Breast epithelium (tissue), 4 donors: ENCODE measurements at regions of chr9 and their contacts with region 1.

Region 1: GRCh38 chr9:71783120-71783530 is 14.8 kb upstream of the CEMIP2 start:
- DNase-seq: peak in 1 of 2 donors; percentile 39
- H3K4me3 ChIP-seq: peak overlapping the region in 1 of 3 donors; percentile 30
- H3K27ac ChIP-seq: peak overlapping the region in 1 of 2 donors; percentile 19
- H3K4me1 ChIP-seq: no peaks in the 10 kb centered on the region
- H3K27me3 ChIP-seq: no peaks in the 10 kb centered on the region
- CTCF ChIP-seq: no peak
- POLR2A ChIP-seq: no peak

Region 2: DNA sequence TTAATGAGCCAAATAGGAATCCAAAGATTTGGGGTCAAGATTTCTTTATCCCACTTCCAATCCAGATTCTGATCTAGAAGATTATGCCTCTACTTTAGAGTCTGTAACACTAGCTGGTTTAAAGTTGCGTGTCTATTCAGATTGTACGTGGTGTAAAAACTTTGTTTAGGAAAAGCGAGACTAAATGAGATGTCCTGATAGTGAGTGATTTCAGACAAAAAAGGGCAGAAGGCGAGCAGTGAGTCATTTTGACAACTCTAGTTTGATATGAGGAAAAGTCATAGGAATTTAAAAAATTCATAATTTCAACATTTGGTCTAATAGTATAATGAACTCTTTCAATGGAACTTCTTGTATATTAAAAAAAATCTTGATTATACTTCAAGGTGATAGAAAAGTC is 1249.1 kb before region 1 on chr9:
- intact Hi-C with region 1: loop called (anchors 5 kb)
- DNase-seq: no peak
- H3K4me3 ChIP-seq: no peak overlapping the region
- H3K27ac ChIP-seq: no peak overlapping the region
- H3K4me1 ChIP-seq: no peaks in the 10 kb centered on the region
- H3K27me3 ChIP-seq: no peaks in the 10 kb centered on the region
- CTCF ChIP-seq: no peak
- POLR2A ChIP-seq: no peak

Region 3: DNA sequence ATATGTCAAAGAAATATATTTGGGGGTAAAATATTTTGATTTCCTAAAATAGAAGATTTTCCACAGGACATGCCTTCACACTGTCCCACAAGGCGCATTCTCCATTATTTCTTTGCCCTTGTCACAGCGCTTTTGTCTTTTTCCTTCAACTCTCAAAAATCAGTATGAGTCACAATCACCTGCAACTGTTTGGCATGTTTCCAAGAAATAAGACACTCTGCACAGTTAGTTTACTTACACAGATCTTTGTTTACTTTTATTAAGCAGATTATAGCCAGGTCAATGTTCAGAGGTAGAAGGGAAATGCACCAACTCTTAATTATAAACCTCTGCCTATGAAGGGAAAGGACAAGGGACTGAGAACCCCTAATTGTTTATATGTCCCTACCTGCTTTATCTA is 24.3 kb before region 1 on chr9:
- intact Hi-C with region 1: no loop called
- DNase-seq: no peak
- H3K4me3 ChIP-seq: no peak overlapping the region
- H3K27ac ChIP-seq: no peak overlapping the region
- H3K4me1 ChIP-seq: no peaks in the 10 kb centered on the region
- H3K27me3 ChIP-seq: no peaks in the 10 kb centered on the region
- CTCF ChIP-seq: no peak
- POLR2A ChIP-seq: no peak

Region 4: DNA sequence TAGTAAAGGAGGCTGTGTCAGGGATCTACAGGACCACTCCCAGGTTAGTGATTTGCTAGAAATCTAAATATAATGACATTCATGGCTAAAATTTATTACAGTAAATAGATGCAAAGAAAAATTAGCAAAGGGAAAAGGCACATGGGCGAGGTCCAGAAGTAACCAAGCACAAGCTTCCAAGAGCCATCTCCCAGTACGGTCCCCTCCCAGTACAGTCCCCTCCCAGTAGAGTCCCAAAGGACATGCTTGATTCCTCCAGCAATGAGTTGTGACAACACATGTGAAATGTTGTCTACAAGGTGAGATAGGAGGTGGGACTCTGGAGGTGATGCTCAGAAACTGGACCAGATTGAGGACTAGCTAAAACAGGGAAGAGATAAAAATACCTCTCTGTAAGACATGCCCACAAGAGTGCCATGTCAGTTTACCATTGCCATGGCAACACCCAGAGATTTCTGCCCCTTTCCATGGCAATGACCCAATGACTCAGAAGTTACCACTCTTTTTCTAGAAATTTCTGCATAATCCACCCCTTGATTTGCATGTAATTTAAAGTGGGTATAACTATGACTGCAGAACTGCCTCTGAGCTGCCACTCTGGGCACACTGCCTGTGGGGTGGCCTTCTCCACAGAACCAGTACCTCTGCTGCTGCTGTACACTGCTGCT is 13.1 kb after region 1 on chr9:
- intact Hi-C with region 1: no loop called
- DNase-seq: no peak
- H3K4me3 ChIP-seq: no peak overlapping the region
- H3K27ac ChIP-seq: no peak overlapping the region
- H3K4me1 ChIP-seq: no peaks in the 10 kb centered on the region
- H3K27me3 ChIP-seq: no peaks in the 10 kb centered on the region
- CTCF ChIP-seq: no peak
- POLR2A ChIP-seq: no peak